Activated T-helper 1 cell treated with anti-CD3 and anti-CD28 coated beads, Interleukin-12 subunit alpha, Interleukin-12 subunit beta, Interleukin-2, Interleukin-4 antibody, amounts not matched to agents 30 ng/mL and 10 ng/mL and 1 ng/mL, durations not matched to agents 14 hours and 24 hours and 36 hours (primary cell): ENCODE measurements at regions of chr10 and their contacts with region 1.

Region 1: DNA sequence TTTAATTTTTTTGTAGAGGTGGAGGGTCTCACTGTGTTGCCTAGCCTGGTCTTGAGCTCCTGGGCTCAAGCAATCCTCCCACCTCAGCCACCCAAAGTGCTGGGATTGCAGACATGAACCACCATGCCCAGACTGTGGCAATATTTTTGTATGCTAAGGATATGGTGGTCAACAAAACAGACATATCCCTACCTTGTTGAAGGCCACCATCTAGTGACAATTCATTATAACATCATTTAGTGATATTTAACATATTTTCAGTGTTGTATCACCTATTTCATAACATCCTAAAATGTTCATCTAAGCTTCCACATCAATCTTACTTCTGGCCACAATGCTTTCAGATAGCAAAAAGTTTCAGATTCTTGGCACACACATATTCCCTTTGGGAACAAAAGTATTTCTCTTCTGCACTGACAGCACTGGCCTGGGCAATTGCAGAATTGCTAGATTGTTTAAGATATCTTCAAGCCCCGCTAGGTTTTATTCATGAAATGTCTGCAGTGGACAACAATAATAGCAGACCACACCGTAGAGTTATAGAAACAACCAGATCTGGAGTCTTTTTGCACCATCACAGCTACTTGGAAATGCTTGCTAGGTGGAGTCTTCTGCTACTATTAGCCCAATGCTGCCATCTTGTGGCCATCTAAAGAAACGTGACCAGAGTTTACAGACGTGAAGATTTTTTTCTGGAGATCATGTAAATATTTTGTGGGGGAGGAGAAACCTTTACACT is 58.4 kb downstream of the DNAJC12 start:
- DNase-seq: peak; percentile 63
- H3K4me3 Mint-ChIP-seq: no peak overlapping the region
- H3K27ac Mint-ChIP-seq: no peak overlapping the region
- H3K4me1 Mint-ChIP-seq: peaks cover 41% of the 10 kb centered on the region
- H3K27me3 Mint-ChIP-seq: no peaks in the 10 kb centered on the region

Region 2: GRCh38 chr10:67520924-67521520 is 258.6 kb before region 1 on chr10:
- intact Hi-C with region 1: loop called (anchors 1 kb)
- DNase-seq: peak; percentile 9
- H3K4me3 Mint-ChIP-seq: no peak overlapping the region
- H3K27ac Mint-ChIP-seq: no peak overlapping the region
- H3K4me1 Mint-ChIP-seq: peaks cover 7% of the 10 kb centered on the region
- H3K27me3 Mint-ChIP-seq: peaks cover 9% of the 10 kb centered on the region

Region 3: DNA sequence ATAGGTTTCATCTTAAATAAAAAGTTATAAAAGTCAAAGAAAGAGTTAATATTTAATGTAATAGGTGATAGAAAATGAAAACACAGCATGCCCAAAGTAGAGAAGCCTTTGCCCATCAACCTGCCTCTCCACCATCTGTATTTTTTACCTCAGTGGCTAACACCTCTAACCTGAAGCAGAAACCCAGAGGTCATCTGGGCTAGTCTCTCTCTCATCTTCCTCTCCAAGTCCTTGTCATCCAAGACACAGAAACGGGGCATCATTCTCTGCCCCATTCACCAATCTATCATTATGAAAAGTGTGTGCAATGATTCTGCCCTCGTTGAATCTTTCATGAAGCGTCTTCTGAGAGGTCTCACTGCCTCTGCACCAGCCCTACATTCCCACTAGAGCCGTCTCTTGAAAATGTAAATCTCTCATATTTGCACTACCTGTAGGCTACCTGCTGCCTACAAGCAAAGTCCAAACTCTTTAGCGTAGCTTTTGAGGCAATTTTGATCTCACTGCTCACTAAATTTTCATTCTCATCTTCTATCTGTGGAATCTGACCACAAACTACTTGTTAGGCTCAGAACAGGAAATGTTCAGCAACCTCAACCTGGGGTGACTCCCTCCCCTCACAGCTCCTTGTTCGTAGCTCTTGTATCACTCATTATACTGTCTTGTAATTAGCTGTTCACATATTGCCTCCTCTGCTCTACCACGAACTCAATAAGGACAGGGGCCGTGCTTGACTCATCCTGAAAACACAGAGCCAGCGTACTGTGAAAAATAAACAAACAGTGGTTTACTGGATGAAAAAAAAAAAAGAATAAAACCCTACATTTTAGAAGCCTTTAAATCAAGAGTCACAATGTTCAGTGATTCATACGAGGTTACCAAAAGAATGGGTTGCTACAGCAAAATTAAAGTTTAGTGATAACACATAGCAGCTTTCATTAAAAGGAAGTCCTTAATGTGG is 166.8 kb before region 1 on chr10:
- intact Hi-C with region 1: loop called (anchors 1 kb)
- DNase-seq: peak; percentile 66
- H3K4me3 Mint-ChIP-seq: peak overlapping the region; percentile 47
- H3K27ac Mint-ChIP-seq: peak overlapping the region; percentile 49
- H3K4me1 Mint-ChIP-seq: peaks cover 23% of the 10 kb centered on the region
- H3K27me3 Mint-ChIP-seq: peaks cover 9% of the 10 kb centered on the region

Region 4: GRCh38 chr10:67666416-67667034 is 113.1 kb before region 1 on chr10:
- intact Hi-C with region 1: loop called (anchors 1 kb)
- DNase-seq: no peak
- H3K4me3 Mint-ChIP-seq: no peak overlapping the region
- H3K27ac Mint-ChIP-seq: no peak overlapping the region
- H3K4me1 Mint-ChIP-seq: no peaks in the 10 kb centered on the region
- H3K27me3 Mint-ChIP-seq: peaks cover 15% of the 10 kb centered on the region

Region 5: GRCh38 chr10:67697724-67698131 is 81.9 kb before region 1 on chr10:
- intact Hi-C with region 1: loop called (anchors 1 kb)
- DNase-seq: no peak
- H3K4me3 Mint-ChIP-seq: no peak overlapping the region
- H3K27ac Mint-ChIP-seq: no peak overlapping the region
- H3K4me1 Mint-ChIP-seq: no peaks in the 10 kb centered on the region
- H3K27me3 Mint-ChIP-seq: peaks cover 35% of the 10 kb centered on the region